ENCODE measurements at regions of chr4 and their contacts with region 1.

Region 1: GRCh38 chr4:180664766-180665368 is 1578.3 kb upstream of the TENM3 start:
- DNase-seq: peak; percentile 72
- H3K4me3 Mint-ChIP-seq: no peak overlapping the region
- H3K27ac Mint-ChIP-seq: no peak overlapping the region
- H3K4me1 Mint-ChIP-seq: peaks cover 8% of the 10 kb centered on the region
- H3K27me3 Mint-ChIP-seq: no peaks in the 10 kb centered on the region
- CTCF ChIP-seq: peak; percentile 18

Region 2: DNA sequence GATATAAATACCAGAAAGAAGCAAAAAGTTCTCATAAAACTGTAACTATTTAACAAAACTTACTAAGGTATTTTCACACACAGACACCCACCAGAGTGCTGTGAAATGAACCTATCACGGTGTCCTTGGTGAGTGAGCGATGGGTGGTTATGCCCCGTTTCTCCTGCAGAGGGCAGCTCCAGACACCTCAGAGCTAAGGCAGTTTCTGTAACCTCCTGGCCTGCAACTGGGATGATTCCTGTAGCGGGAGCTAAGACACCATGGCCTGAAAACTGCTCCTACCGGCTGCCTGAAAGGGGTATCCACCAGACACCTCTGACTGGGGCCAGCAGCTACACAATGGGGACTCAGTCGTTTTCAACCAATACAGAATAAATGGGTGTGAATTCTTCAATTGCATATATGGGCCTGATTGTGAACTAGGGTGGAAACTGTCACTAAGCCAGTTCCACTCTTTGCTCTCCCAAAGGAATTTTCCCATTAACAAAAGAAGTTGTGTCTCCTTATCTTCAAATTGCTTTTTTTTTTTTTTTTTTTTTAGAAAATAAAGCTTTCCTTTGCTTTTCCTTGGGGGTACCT is 797.5 kb before region 1 on chr4:
- CTCF ChIA-PET with region 1: no interaction called
- intact Hi-C with region 1: loop called (anchors 5 kb)
- DNase-seq: peak; percentile 61
- H3K4me3 Mint-ChIP-seq: no peak overlapping the region
- H3K27ac Mint-ChIP-seq: no peak overlapping the region
- H3K4me1 Mint-ChIP-seq: no peaks in the 10 kb centered on the region
- H3K27me3 Mint-ChIP-seq: no peaks in the 10 kb centered on the region
- CTCF ChIP-seq: peak; percentile 72

Region 3: DNA sequence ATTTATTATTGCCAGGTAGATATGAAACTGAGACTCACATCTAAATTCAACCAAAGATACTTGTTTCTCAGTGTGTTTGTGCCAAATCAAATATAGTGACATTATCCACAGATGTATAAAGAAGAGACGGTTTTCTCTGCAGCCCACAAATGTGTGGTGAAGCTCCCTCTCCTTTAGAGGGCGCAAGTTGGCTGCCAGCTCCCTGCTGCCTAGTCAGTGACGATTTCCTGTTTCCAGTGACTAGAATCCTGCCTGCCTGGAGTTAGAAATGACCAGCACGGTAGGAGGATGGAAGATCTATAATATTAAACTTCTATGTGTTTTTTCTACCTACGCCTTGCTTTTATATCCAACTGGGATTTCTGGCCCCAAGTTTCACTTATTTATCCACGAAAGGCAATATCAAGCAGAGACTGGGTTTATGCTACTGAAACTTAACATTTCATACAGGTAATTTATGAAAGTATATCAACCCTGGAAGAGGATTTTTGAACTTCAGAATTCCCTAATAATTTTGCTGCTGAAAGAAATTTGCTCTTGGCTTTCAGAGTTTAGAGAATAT is 215.4 kb before region 1 on chr4:
- CTCF ChIA-PET with region 1: no interaction called
- intact Hi-C with region 1: loop called (anchors 1 kb)
- DNase-seq: peak; percentile 53
- H3K4me3 Mint-ChIP-seq: no peak overlapping the region
- H3K27ac Mint-ChIP-seq: no peak overlapping the region
- H3K4me1 Mint-ChIP-seq: no peaks in the 10 kb centered on the region
- H3K27me3 Mint-ChIP-seq: no peaks in the 10 kb centered on the region
- CTCF ChIP-seq: peak; percentile 33

Region 4: GRCh38 chr4:180650273-180650672 is 14.6 kb before region 1 on chr4:
- CTCF ChIA-PET with region 1: no interaction called
- intact Hi-C with region 1: no loop called
- DNase-seq: no peak
- H3K4me3 Mint-ChIP-seq: no peak overlapping the region
- H3K27ac Mint-ChIP-seq: no peak overlapping the region
- H3K4me1 Mint-ChIP-seq: no peaks in the 10 kb centered on the region
- H3K27me3 Mint-ChIP-seq: no peaks in the 10 kb centered on the region
- CTCF ChIP-seq: no peak

Region 5: GRCh38 chr4:180745019-180745418 is 80.2 kb after region 1 on chr4:
- CTCF ChIA-PET with region 1: no interaction called
- intact Hi-C with region 1: no loop called
- DNase-seq: no peak
- H3K4me3 Mint-ChIP-seq: no peak overlapping the region
- H3K27ac Mint-ChIP-seq: no peak overlapping the region
- H3K4me1 Mint-ChIP-seq: no peaks in the 10 kb centered on the region
- H3K27me3 Mint-ChIP-seq: no peaks in the 10 kb centered on the region
- CTCF ChIP-seq: no peak

Region 6: GRCh38 chr4:180840142-180840541 is 175.3 kb after region 1 on chr4:
- CTCF ChIA-PET with region 1: no interaction called
- intact Hi-C with region 1: no loop called
- DNase-seq: no peak
- H3K4me3 Mint-ChIP-seq: no peak overlapping the region
- H3K27ac Mint-ChIP-seq: no peak overlapping the region
- H3K4me1 Mint-ChIP-seq: peaks cover 7% of the 10 kb centered on the region
- H3K27me3 Mint-ChIP-seq: no peaks in the 10 kb centered on the region
- CTCF ChIP-seq: no peak

Region 7: GRCh38 chr4:180909279-180909678 is 244.4 kb after region 1 on chr4:
- CTCF ChIA-PET with region 1: no interaction called
- intact Hi-C with region 1: no loop called
- DNase-seq: no peak
- H3K4me3 Mint-ChIP-seq: no peak overlapping the region
- H3K27ac Mint-ChIP-seq: no peak overlapping the region
- H3K4me1 Mint-ChIP-seq: no peaks in the 10 kb centered on the region
- H3K27me3 Mint-ChIP-seq: no peaks in the 10 kb centered on the region
- CTCF ChIP-seq: no peak

Region 8: DNA sequence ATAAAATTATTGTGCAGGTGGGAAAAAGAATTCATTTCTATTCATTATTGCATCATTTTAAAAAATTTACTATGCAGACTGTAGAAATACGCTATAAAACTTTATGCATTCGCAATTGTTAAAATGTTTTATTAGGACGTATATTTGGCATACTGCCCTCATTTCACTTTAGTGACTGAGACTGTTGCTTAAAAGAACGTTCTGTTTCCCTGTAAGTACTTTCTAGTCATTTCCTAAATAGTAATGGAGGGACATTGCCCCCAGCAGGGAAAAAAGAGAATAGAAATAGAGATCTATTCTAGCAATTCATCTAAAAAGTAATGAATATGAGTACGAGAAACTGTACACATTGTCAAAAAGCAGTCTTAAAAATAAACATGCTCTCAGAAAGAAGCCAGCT is 282.6 kb after region 1 on chr4:
- CTCF ChIA-PET with region 1: no interaction called
- intact Hi-C with region 1: loop called (anchors 5 kb)
- DNase-seq: no peak
- H3K4me3 Mint-ChIP-seq: no peak overlapping the region
- H3K27ac Mint-ChIP-seq: no peak overlapping the region
- H3K4me1 Mint-ChIP-seq: no peaks in the 10 kb centered on the region
- H3K27me3 Mint-ChIP-seq: no peaks in the 10 kb centered on the region
- CTCF ChIP-seq: no peak

Region 9: GRCh38 chr4:181528570-181529184 is 863.8 kb after region 1 on chr4:
- CTCF ChIA-PET with region 1: no interaction called
- intact Hi-C with region 1: loop called (anchors 1 kb)
- DNase-seq: peak; percentile 79
- H3K4me3 Mint-ChIP-seq: no peak overlapping the region
- H3K27ac Mint-ChIP-seq: no peak overlapping the region
- H3K4me1 Mint-ChIP-seq: no peaks in the 10 kb centered on the region
- H3K27me3 Mint-ChIP-seq: no peaks in the 10 kb centered on the region
- CTCF ChIP-seq: peak; percentile 67

Measured in Calu3 (cell line).